ENCODE measurements at regions of chr3 and their contacts with region 1.

Region 1: GRCh38 chr3:118884748-118885206 is 149.9 kb downstream of the IGSF11 start:
- DNase-seq: peak; percentile 65
- H3K4me3 ChIP-seq: no peak overlapping the region
- H3K27ac ChIP-seq: no peak overlapping the region
- H3K4me1 ChIP-seq: peaks cover 1% of the 10 kb centered on the region
- H3K27me3 ChIP-seq: peaks cover 37% of the 10 kb centered on the region
- CTCF ChIP-seq: peak; percentile 90

Region 2: GRCh38 chr3:118587037-118587741 is 297.6 kb before region 1 on chr3:
- intact Hi-C with region 1: no loop called
- DNase-seq: no peak
- H3K4me3 ChIP-seq: no peak overlapping the region
- H3K27ac ChIP-seq: no peak overlapping the region
- H3K4me1 ChIP-seq: no peaks in the 10 kb centered on the region
- H3K27me3 ChIP-seq: no peaks in the 10 kb centered on the region
- CTCF ChIP-seq: no peak

Region 3: DNA sequence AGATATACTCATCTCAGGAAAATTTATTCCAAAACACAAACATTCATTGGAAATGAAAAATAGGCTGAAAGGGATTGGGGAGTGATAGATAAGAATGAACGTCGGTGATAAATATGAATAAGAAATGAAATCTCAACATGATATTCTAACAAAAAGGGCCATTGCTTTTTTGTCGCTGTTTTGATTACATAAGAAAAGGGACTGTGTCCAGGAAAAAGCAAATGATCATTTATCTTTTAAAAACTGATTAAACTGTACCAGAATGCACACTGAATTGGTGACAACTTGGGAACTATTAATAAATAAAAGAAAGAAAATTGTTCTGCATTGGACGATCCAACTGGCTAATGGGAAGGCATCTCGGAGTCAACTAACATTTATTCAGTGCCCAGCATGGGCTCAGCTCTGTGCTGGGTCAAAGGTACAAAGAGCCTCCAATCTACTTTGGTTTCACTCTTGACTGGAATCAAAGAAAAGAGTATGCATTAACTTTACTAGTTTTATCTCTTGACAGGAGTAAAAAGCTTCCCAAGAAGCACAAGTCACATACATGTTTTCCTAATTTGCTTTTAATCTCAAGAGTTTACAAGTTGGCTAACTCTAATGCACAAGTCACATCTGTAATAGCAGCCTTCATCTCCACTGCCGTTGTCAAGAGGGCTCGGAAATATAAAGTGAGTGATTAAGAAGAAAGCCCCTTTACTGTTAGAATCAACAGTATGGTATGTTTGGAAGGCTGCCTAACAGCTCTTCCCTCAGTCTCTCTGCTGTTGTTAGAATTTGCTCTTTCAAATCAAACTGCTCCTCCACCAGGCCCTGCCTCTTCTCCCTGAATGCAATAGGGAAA is 130.1 kb before region 1 on chr3:
- intact Hi-C with region 1: no loop called
- DNase-seq: no peak
- H3K4me3 ChIP-seq: no peak overlapping the region
- H3K27ac ChIP-seq: no peak overlapping the region
- H3K4me1 ChIP-seq: no peaks in the 10 kb centered on the region
- H3K27me3 ChIP-seq: peaks cover 3% of the 10 kb centered on the region
- CTCF ChIP-seq: no peak

Region 4: GRCh38 chr3:119034256-119035013 is 149.7 kb after region 1 on chr3 and contains the start of gene IGSF11:
- intact Hi-C with region 1: loop called (anchors 5 kb)
- DNase-seq: peak; percentile 53
- H3K4me3 ChIP-seq: peak within 1 kb of the TSS; percentile 74
- H3K27ac ChIP-seq: peak within 1 kb of the TSS; percentile 65
- H3K4me1 ChIP-seq: peaks cover 15% of the 10 kb centered on the region
- H3K27me3 ChIP-seq: peaks cover 66% of the 10 kb centered on the region
- CTCF ChIP-seq: peak; percentile 79
- total RNA-seq, gene IGSF11: 2.1 TPM

Region 5: GRCh38 chr3:119098619-119099222 is 213.9 kb after region 1 on chr3:
- intact Hi-C with region 1: loop called (anchors 2 kb)
- DNase-seq: no peak
- H3K4me3 ChIP-seq: no peak overlapping the region
- H3K27ac ChIP-seq: no peak overlapping the region
- H3K4me1 ChIP-seq: no peaks in the 10 kb centered on the region
- H3K27me3 ChIP-seq: no peaks in the 10 kb centered on the region
- CTCF ChIP-seq: peak; percentile 76

Region 6: DNA sequence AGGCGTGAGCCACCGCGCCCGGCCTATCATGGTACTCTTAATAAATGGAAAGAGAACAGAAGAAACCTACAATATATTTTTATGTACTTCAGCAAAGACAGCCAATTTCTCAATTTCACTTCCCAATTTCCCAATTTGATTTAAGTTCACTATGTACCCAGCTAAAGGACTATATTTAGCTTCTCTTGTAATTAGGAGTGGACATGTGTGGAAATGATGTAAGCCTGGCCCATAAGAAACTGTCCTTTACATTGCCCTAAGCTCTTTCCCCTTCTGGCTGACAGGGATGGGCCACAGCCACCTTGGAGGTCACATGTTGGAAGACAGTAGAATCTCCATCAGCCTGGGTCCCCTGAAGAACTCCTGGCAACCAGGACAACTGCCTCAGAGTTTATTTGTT is 572.5 kb after region 1 on chr3:
- intact Hi-C with region 1: no loop called
- DNase-seq: no peak
- H3K4me3 ChIP-seq: no peak overlapping the region
- H3K27ac ChIP-seq: no peak overlapping the region
- H3K4me1 ChIP-seq: peaks cover 61% of the 10 kb centered on the region
- H3K27me3 ChIP-seq: no peaks in the 10 kb centered on the region
- CTCF ChIP-seq: no peak

Measured in left ventricle myocardium inferior (tissue), 1 donor.